ENCODE measurements at regions of chr9 and their contacts with region 1.

Region 1: GRCh38 chr9:132944302-132945185 is at the start of gene TSC1:
- DNase-seq: peak; percentile 97
- ATAC-seq: peak; percentile 79
- H3K4me3 Mint-ChIP-seq: peak within 1 kb of the TSS; percentile 84
- H3K27ac Mint-ChIP-seq: peak within 1 kb of the TSS; percentile 100
- H3K4me1 Mint-ChIP-seq: peaks cover 54% of the 10 kb centered on the region
- H3K27me3 Mint-ChIP-seq: no peaks in the 10 kb centered on the region
- CTCF ChIP-seq: no peak
- total RNA-seq, gene TSC1: 46.4 to 53.9 TPM (median 52.9 TPM) in 3 replicates

Region 2: GRCh38 chr9:132910376-132910775 is 34.2 kb before region 1 on chr9:
- CTCF ChIA-PET with region 1: no interaction called
- POLR2A ChIA-PET with region 1: interaction called, 16 read pairs
- DNase-seq: no peak
- ATAC-seq: no peak
- H3K4me3 Mint-ChIP-seq: no peak overlapping the region
- H3K27ac Mint-ChIP-seq: no peak overlapping the region
- H3K4me1 Mint-ChIP-seq: no peaks in the 10 kb centered on the region
- H3K27me3 Mint-ChIP-seq: no peaks in the 10 kb centered on the region
- CTCF ChIP-seq: no peak

Region 3: DNA sequence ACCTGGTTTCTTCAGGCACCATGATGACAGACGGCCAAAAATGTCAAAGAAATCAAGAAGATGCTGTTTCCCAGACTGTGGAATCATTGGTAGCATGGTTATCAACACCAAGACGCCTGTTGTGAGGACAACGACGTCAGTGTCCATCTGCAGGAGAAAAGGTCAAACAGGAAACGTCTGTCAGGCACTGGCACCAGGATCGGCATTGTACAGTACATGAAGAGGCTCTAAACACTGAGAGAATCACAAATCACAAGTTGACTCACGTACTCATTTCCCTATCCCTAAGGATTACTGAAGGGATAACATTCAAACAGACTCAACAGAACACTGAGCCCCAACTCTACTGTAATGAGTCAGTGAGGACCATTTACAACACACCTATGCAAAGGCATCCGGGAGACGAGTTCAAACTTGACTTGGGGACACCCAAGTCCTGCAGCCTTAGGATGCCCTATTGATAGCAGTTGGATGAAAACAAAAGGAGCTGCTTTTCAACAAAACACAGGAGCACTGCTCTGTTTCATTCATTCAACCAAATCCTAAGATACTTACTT is 21.1 kb before region 1 on chr9:
- CTCF ChIA-PET with region 1: no interaction called
- POLR2A ChIA-PET with region 1: no interaction called
- DNase-seq: no peak
- ATAC-seq: no peak
- H3K4me3 Mint-ChIP-seq: no peak overlapping the region
- H3K27ac Mint-ChIP-seq: no peak overlapping the region
- H3K4me1 Mint-ChIP-seq: no peaks in the 10 kb centered on the region
- H3K27me3 Mint-ChIP-seq: no peaks in the 10 kb centered on the region
- CTCF ChIP-seq: no peak

Region 4: DNA sequence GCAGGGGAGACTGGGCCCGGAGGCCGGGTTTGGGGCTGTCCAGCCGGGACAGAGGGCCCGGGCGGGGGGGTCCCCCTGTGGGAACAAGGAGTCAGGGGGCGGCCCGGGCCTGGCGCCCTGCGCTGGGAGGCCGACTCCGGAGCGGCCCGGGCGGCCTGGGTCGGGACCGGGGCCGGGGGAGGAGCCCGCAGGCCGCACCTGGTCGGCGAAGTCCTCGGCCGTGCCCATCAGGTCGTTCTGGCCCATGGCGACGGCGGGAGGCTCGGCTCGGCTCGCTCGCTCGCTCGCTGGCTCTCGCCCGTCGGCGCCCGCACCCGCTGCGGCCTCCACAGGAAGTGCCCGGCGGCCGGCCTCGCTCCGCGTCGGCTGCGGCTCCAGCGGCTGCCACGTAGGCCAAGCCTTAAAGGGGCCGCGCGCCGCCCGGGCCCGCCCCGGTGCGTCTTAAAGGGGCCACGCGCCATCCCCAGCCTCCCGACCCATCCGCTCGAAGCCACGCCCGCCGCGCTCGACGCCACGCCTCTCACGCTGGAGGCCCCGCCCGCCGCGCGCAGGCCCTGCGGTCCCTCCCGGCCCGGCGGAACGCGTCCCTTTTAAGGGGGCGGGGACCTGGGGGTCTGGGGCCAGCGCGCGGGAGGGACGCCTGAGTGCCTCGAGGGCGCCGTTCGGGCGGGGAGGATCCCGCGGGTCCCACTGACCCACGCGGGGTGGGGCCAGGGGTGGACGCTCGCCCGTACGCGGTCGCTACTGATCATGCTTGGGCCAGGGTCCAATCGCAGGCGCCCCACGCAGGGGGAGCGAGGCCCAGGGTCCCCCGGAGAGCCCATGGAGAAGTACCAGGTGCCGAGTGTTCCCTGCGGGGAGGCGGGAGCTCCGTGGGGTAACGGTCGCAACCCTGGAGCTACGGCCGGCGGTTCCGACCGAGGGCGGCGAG is 431.4 kb after region 1 on chr9 and contains the starts of genes STKLD1 and SURF4:
- CTCF ChIA-PET with region 1: no interaction called
- POLR2A ChIA-PET with region 1: no interaction called
- DNase-seq: peak; percentile 96
- ATAC-seq: peak; percentile 92
- H3K4me3 Mint-ChIP-seq: peak within 1 kb of the TSS; percentile 98
- H3K27ac Mint-ChIP-seq: peak within 1 kb of the TSS; percentile 96
- H3K4me1 Mint-ChIP-seq: peaks cover 17% of the 10 kb centered on the region
- H3K27me3 Mint-ChIP-seq: peaks cover 30% of the 10 kb centered on the region
- CTCF ChIP-seq: no peak
- total RNA-seq, gene STKLD1: 0.94 to 1.6 TPM (median 0.98 TPM) in 3 replicates
- total RNA-seq, gene SURF4: 171 to 173 TPM (median 173 TPM) in 3 replicates

Measured in WTC11 (cell line).